Testis (tissue), 5 donors: ENCODE measurements at regions of chr1 and their contacts with region 1.

Region 1: GRCh38 chr1:109404838-109405237 is 7.1 kb upstream of the SORT1 start:
- DNase-seq: no peak
- H3K4me3 ChIP-seq: no peak overlapping the region
- H3K27ac ChIP-seq: no peak overlapping the region
- H3K4me1 ChIP-seq: no peaks in the 10 kb centered on the region
- H3K27me3 ChIP-seq: no peaks in the 10 kb centered on the region
- CTCF ChIP-seq: no peak
- POLR2A ChIP-seq: no peak

Region 2: GRCh38 chr1:109263597-109264398 is 141.0 kb before region 1 on chr1:
- intact Hi-C with region 1: loop called (anchors 5 kb)
- DNase-seq: peak; percentile 93
- H3K4me3 ChIP-seq: no peak overlapping the region
- H3K27ac ChIP-seq: no peak overlapping the region
- H3K4me1 ChIP-seq: peaks cover 16% of the 10 kb centered on the region
- H3K27me3 ChIP-seq: no peaks in the 10 kb centered on the region
- CTCF ChIP-seq: peak; percentile 93 to 100 (median 99)
- POLR2A ChIP-seq: no peak